ENCODE measurements at regions of chr3 and their contacts with region 1.

Region 1: GRCh38 chr3:156151824-156152428 is 31.5 kb downstream of the KCNAB1 start:
- DNase-seq: peak; percentile 69
- ATAC-seq: peak; percentile 76
- H3K4me3 ChIP-seq: no peak overlapping the region
- H3K27ac ChIP-seq: no peak overlapping the region
- H3K4me1 ChIP-seq: peaks cover 3% of the 10 kb centered on the region
- H3K27me3 ChIP-seq: peaks cover 4% of the 10 kb centered on the region
- CTCF ChIP-seq: peak; percentile 90
- POLR2A ChIP-seq: no peak
- RAD21 ChIP-seq: peak; percentile 85

Region 2: DNA sequence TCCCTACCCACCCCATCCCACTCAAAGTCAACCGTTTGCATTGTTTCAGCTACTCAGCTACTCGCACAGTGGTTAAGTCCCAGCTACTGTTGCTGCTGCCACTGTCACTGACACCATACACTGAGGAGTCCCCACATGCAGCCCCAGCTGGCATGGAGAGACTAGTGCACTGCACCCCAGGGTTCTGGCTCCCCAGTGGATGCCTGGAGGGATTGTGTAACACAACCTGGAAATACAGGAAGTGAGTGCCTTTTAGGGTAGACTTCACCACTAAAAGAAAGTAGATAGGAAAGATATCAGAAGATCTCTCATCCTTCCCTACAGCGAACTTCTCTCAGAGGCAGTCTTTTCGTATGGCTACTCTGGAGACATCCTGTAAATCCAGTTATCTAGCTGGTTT is 689.3 kb before region 1 on chr3:
- CTCF ChIA-PET with region 1: no interaction called
- POLR2A ChIA-PET with region 1: no interaction called
- dilution Hi-C with region 1: no loop called
- in situ Hi-C with region 1: no loop called
- intact Hi-C with region 1: no loop called
- DNase-seq: no peak
- ATAC-seq: no peak
- H3K4me3 ChIP-seq: no peak overlapping the region
- H3K27ac ChIP-seq: no peak overlapping the region
- H3K4me1 ChIP-seq: no peaks in the 10 kb centered on the region
- H3K27me3 ChIP-seq: no peaks in the 10 kb centered on the region
- CTCF ChIP-seq: no peak
- POLR2A ChIP-seq: no peak
- RAD21 ChIP-seq: no peak

Region 3: GRCh38 chr3:155805802-155806618 is 345.9 kb before region 1 on chr3 and contains the start of gene C3orf33:
- CTCF ChIA-PET with region 1: no interaction called
- POLR2A ChIA-PET with region 1: no interaction called
- dilution Hi-C with region 1: no loop called
- in situ Hi-C with region 1: no loop called
- intact Hi-C with region 1: loop called (anchors 5 kb)
- DNase-seq: peak; percentile 37
- ATAC-seq: peak; percentile 99
- H3K4me3 ChIP-seq: peak within 1 kb of the TSS; percentile 69
- H3K27ac ChIP-seq: peak within 1 kb of the TSS; percentile 79
- H3K4me1 ChIP-seq: no peaks in the 10 kb centered on the region
- H3K27me3 ChIP-seq: no peaks in the 10 kb centered on the region
- CTCF ChIP-seq: peak; percentile 77
- POLR2A ChIP-seq: peak; percentile 33; the same call in 1 of the 2 replicates
- RAD21 ChIP-seq: peak; percentile 65
- total RNA-seq, gene C3orf33: 0.72 and 1.1 TPM in 2 replicates

Region 4: DNA sequence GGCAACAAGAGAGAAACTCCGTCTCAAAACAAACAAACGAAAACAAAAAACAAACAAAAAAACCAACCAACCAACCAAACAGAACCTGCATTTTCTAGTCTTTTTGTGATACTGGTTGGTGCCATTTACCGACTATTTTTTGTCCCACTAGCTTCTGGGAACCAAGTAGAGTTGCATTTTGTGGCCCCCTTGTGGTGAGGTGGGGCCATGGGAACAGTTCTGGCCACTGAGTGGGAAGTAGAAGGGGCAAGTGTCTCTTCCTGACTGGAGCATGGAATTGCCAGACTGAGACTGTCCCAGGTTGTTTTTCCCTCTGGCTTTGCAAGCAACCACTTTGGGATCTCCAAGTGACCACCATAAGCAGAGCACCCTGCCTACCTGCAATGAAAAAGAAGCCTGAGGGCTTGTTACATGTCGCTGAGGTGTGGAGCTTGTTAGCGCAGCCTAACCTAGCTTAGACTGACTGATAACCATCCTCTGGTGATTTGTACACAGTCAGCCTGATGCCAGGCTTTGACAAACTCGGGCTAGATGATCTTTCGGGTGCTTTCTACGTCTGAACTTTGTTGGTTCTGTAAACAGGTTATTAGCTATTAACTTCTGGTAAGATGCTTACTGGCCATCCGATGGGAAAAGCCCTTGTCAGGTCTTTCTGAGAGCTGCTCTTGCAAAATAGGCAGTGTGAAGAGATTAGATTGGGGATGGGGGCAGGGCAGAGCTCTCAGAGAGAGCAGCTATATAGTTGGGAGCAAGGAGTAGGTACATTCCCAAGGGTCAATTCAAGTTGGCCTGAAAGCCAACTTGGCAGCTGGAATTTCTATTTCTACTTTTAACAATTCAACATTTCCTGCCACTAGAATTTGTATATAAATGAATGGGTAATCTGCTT is 230.8 kb after region 1 on chr3:
- CTCF ChIA-PET with region 1: interaction called, 10 read pairs
- POLR2A ChIA-PET with region 1: no interaction called
- dilution Hi-C with region 1: no loop called
- in situ Hi-C with region 1: loop called (anchors 10 kb)
- intact Hi-C with region 1: loop called (anchors 1 kb)
- DNase-seq: peak; percentile 41
- ATAC-seq: peak; percentile 65
- H3K4me3 ChIP-seq: no peak overlapping the region
- H3K27ac ChIP-seq: no peak overlapping the region
- H3K4me1 ChIP-seq: no peaks in the 10 kb centered on the region
- H3K27me3 ChIP-seq: peaks cover 27% of the 10 kb centered on the region
- CTCF ChIP-seq: peak; percentile 72
- POLR2A ChIP-seq: no peak
- RAD21 ChIP-seq: peak; percentile 77

Region 5: GRCh38 chr3:156509189-156510174 is 357.6 kb after region 1 on chr3:
- CTCF ChIA-PET with region 1: interaction called, 21 read pairs
- POLR2A ChIA-PET with region 1: no interaction called
- dilution Hi-C with region 1: loop called (anchors 25 kb)
- in situ Hi-C with region 1: loop called (anchors 5 kb)
- intact Hi-C with region 1: loop called (anchors 1 kb)
- DNase-seq: peak; percentile 66
- ATAC-seq: peak; percentile 91
- H3K4me3 ChIP-seq: no peak overlapping the region
- H3K27ac ChIP-seq: no peak overlapping the region
- H3K4me1 ChIP-seq: 0 out of 2 replicates have a peak, but pooled peaks cover 2% of the 10 kb centered on the region
- H3K27me3 ChIP-seq: peaks cover 12% of the 10 kb centered on the region
- CTCF ChIP-seq: peak; percentile 67
- POLR2A ChIP-seq: no peak
- RAD21 ChIP-seq: peak; percentile 74

Region 6: DNA sequence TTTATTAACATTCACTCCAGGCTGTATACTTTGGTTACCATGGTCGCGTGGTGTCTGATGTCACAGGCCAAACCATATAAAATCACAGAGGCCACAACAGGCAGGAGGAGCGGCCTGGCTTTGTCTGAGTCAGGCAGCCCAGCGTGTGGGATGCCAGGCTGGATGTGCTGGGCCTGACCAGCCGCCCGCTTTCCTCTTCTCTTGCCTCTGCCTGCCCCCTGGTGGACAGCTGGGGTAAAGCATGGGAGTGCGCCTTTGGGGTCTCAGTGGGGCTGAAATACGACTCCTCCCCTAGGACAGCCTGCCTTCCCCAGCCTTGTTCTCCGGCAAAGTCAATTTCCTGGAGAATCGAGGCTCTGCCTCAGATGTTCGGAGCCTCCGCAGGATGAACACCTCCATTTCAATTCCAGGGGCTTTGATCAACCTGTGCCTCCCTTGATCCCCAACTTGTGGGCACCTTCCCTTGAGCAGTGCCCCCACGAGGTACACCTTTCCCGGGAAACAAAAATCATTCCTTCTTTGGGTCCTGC is 929.8 kb after region 1 on chr3:
- CTCF ChIA-PET with region 1: no interaction called
- POLR2A ChIA-PET with region 1: no interaction called
- dilution Hi-C with region 1: no loop called
- in situ Hi-C with region 1: no loop called
- intact Hi-C with region 1: loop called (anchors 1 kb)
- DNase-seq: peak; percentile 94
- ATAC-seq: peak; percentile 97
- H3K4me3 ChIP-seq: no peak overlapping the region
- H3K27ac ChIP-seq: no peak overlapping the region
- H3K4me1 ChIP-seq: peaks cover 15% of the 10 kb centered on the region
- H3K27me3 ChIP-seq: no peaks in the 10 kb centered on the region
- CTCF ChIP-seq: peak; percentile 96
- POLR2A ChIP-seq: peak; percentile 82
- RAD21 ChIP-seq: peak; percentile 98

Region 7: GRCh38 chr3:157130467-157131251 is 978.7 kb after region 1 on chr3:
- CTCF ChIA-PET with region 1: no interaction called
- POLR2A ChIA-PET with region 1: no interaction called
- dilution Hi-C with region 1: no loop called
- in situ Hi-C with region 1: loop called (anchors 10 kb)
- intact Hi-C with region 1: no loop called
- DNase-seq: peak; percentile 64
- ATAC-seq: no peak
- H3K4me3 ChIP-seq: no peak overlapping the region
- H3K27ac ChIP-seq: 0 out of 2 replicates have a peak overlapping the region, but pooled peaks have one; percentile 10
- H3K4me1 ChIP-seq: peaks cover 35% of the 10 kb centered on the region
- H3K27me3 ChIP-seq: no peaks in the 10 kb centered on the region
- CTCF ChIP-seq: peak; percentile 74
- POLR2A ChIP-seq: no peak
- RAD21 ChIP-seq: peak; percentile 76

Measured in IMR-90 (cell line).